BJ (cell line): ENCODE measurements at regions of chr9 and their contacts with region 1.

Region 1: DNA sequence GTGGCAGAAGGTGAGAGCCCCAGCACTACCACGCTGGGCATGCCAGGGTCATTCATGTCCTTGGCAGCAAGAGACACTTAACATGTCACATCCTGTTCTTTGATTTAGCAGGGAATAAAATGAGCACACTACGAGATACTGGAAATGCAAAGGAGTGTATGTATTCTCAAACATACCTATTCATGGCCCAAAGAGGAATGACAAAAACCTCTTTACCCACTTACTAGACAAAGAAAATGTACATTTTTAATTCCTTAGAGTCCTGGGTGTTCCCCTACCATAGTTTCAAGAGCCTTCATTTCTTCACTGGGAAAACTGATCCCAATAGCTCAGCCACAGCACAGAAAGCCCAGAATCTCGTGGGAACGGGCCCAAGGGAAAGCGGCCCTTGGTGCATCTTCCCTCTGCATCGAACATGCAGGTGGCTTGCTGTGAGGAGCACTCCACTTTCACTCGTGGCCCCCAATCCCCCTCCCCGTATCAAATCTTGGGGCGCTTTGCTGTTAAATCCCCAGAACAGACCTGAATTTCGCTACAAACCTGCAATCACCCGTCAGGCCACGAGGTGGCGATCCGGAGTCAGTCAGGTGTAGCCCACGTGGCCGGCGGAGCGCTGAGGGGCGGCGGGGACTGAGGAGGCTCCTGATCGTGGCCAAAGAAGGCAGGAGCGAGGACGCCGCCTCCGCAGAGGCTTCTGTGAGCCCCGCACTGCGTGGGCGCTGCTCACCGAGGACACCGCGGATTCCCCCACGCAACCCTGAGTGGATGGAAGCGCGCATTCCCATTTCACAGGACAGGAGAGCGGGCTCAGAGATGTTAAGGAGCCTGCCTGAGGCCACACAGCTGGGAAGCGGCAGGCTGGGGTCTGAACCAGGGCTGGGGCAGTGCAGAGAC is 91.4 kb downstream of the LMX1B start:
- DNase-seq: no peak
- H3K4me3 ChIP-seq: no peak overlapping the region
- H3K27me3 ChIP-seq: peaks cover 10% of the 10 kb centered on the region
- CTCF ChIP-seq: peak; percentile 92

Region 2: DNA sequence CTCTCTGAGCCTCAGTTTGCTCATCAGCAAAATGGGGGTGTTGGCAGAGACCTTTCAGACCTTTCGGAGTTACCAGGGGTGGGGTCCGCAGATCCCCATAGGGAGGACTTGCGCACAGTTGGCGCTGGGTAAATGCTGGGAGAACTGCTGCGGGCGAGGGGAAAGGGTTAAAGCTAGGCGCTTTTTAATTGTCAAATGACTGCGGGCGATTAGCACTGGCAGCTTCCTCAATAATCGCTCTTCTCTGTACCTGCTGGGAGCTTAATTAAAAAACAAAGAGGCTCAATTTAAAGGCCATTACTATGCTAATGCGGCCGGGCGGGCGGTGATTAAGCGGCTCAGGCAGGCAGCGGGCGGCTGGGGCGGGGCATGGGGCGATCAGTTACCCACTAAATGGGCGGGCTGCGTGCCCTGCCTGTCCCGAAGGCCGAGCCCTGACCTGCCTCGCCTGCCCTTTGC is 28.4 kb before region 1 on chr9:
- CTCF ChIA-PET with region 1: interaction called, 14 read pairs
- POLR2A ChIA-PET with region 1: no interaction called
- DNase-seq: no peak
- H3K4me3 ChIP-seq: no peak overlapping the region
- H3K27me3 ChIP-seq: peaks cover 16% of the 10 kb centered on the region
- CTCF ChIP-seq: no peak

Region 3: DNA sequence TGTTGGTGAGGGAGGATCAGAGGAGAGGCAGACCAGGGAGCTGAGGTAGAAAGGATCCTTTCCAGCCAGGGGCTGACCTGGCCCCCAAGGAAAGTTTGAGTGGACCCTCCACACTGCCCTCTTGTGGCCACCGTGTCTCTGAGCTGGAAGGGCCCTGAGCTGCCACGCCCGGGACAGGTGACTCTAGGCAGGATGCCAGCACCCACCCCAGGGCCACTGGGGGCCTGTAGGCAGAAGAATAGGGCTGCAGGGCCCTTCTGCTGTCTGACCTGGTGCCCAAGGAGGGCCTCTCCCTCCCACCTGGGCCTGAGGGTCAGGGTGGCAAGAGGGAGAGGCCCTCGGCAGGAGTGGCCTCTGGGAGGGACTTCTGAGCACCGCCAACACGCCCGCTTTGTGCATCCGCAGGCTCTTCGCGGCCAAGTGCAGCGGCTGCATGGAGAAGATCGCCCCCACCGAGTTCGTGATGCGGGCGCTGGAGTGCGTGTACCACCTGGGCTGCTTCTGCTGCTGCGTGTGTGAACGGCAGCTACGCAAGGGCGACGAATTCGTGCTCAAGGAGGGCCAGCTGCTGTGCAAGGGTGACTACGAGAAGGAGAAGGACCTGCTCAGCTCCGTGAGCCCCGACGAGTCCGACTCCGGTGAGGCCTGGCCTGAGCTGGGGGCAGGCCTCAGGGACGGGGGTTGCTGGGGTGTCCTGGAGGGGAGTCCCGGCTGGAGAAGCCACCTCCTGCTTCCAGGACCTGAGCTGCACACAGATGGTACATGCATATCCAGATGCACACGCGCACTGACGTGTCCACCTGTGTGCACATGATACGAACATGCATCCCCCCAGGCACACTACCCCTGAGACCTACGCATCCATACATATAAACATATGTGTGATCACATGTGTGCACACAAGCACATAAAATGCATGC is 14.4 kb before region 1 on chr9:
- CTCF ChIA-PET with region 1: interaction called, 13 read pairs
- POLR2A ChIA-PET with region 1: no interaction called
- DNase-seq: no peak
- H3K4me3 ChIP-seq: no peak overlapping the region
- H3K27me3 ChIP-seq: peaks cover 3% of the 10 kb centered on the region; the same call in 1 of the 2 replicates
- CTCF ChIP-seq: peak; percentile 63

Region 4: DNA sequence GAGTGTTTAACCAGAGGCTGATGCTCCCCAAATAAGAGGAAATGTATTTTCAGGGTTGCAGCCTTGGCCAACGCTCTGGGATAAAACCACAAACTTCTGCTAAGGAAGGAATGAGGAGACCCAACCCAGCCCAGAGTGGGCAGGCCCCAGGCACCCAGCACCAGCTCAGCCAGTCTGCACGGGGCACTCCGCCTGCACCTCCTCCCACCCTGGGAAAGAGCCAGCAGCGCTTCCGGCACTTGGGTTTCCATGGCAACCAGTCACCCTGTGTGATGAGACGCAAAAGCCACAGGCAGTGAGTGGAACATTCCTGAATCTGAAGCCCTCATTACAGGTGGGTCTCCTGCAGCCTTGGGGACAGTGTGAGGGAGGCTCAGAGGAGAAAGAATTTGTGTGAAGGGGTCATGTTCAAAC is 14.5 kb after region 1 on chr9:
- CTCF ChIA-PET with region 1: interaction called, 45 read pairs
- POLR2A ChIA-PET with region 1: interaction called, 4 read pairs
- DNase-seq: no peak
- H3K4me3 ChIP-seq: no peak overlapping the region
- H3K27me3 ChIP-seq: peaks cover 8% of the 10 kb centered on the region
- CTCF ChIP-seq: no peak

Region 5: DNA sequence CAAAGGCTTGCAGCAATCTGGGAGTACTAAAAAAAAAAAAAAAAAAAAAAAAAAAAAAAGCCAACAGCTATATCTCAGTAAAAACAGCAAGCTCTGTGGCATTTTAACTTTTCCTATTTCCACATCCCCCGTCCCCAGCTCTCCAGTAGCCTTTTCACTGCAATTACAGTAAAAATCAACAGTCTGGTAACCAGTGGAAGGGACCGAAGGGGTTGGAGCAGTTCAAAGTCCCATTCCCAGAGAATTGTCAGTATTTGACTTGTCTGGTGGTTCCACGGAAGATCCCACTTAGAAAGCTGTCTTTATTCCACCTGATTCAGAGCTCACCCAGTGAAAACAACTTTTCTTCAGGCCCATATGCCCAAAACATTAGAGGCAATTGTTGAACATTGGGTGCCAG is 27.9 kb after region 1 on chr9:
- CTCF ChIA-PET with region 1: interaction called, 13 read pairs
- POLR2A ChIA-PET with region 1: no interaction called
- DNase-seq: no peak
- H3K4me3 ChIP-seq: no peak overlapping the region
- H3K27me3 ChIP-seq: no peaks in the 10 kb centered on the region; the same call in 1 of the 2 replicates
- CTCF ChIP-seq: no peak

Region 6: DNA sequence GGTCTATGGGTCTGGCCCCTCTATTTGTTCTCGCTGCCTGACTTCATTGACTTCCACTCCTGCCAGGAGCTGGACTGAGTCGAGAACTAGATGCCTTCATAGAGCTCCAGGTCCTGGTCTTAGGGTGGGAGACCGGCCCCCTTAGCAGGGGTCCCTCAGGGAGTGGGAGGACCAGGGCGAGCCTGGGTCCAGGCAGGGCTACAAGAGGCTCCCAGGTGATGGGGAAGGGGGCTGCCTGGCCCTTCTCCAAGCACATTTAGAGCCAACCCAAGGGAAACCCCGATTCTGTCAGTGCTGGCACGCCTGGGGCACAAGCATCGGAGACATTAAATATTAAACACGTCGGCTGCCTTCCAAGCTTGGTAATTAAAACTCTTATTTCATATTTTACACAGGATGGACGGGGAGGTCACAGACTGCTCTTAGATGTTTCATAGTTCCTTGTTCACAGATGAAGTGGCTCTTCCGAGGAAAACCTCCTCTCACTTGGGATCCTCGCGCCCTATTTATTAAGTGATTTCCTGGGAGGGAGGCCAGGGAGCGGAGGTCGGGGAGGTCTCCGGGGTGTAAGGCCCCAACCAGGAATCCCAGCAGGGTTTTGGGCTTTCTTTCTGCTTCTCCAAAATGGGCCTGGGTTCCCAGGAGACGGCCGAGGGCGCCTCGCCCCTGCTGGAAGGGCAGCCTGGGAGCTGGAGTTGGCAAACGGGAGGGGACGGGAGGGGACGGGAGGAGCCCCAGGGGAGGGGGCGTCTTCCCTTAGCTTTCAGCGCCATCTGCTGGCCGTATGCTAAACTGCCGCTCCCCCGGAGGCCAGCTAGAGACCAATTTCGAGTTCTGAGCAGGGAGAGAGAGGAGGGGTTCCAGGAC is 76.3 kb after region 1 on chr9:
- CTCF ChIA-PET with region 1: interaction called, 252 read pairs
- POLR2A ChIA-PET with region 1: no interaction called
- DNase-seq: no peak
- H3K4me3 ChIP-seq: no peak overlapping the region
- H3K27me3 ChIP-seq: peaks cover 9% of the 10 kb centered on the region; the same call in 1 of the 2 replicates
- CTCF ChIP-seq: peak; percentile 91

Region 7: DNA sequence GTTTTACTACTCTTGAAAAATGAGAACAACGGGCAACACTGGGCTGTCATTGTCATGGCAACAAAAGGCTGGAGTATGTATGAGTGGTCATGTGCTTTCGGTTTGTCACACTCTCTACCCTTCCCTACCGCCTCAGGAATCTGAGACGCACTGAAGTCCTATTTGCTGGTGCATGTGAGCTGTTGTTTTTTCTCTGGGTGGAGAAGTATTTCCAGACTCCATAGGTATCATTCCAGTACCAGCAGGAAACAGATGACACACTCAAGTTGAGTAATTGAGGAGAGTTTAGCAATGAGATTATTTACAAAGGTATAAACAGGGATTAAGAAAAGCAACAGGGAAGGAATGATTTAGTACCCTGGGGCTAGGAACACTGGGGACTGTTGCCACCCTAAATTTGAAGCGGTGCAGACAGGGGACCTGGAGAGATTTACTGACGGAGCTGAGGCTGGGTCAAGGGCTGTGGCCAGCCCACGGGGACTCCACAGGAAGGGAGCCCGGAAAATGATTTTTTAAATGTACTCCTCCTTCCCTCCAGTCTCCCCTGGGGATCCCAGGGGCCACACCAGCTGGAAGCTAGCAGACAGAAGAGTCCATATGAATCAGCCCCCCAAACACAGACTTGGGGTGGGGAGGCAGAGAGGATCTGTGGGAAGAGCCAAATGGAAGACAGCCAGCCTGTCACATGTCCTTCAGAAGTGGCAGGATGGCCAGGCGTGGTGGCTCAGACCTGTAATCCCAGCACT is 86.5 kb after region 1 on chr9:
- CTCF ChIA-PET with region 1: interaction called, 20 read pairs
- POLR2A ChIA-PET with region 1: no interaction called
- DNase-seq: peak; percentile 25
- H3K4me3 ChIP-seq: no peak overlapping the region
- H3K27me3 ChIP-seq: no peaks in the 10 kb centered on the region; the same call in 1 of the 2 replicates
- CTCF ChIP-seq: no peak